H1 (cell line): ENCODE measurements at regions of chr2 and their contacts with region 1.

Region 1: GRCh38 chr2:84925724-84926376 is 20.4 kb downstream of the TMSB10 start:
- DNase-seq: peak; percentile 96 to 100
- H3K4me3 ChIP-seq: peak overlapping the region in 3 of 4 experiments; percentile 28 to 53 (median 45); a peak in 6 of 8 replicates
- H3K27ac ChIP-seq: no peak overlapping the region
- H3K4me1 ChIP-seq: peaks cover 0 to 10% (median 2%) of the 10 kb centered on the region in 4 experiments; a peak in 2 of 7 replicates
- H3K27me3 ChIP-seq: peaks cover 0 to 9% (median 3%) of the 10 kb centered on the region in 4 experiments; a peak in 2 of 7 replicates
- CTCF ChIP-seq: peak; percentile 96 to 99 (median 97)
- EP300 ChIP-seq: peak in 1 of 2 experiments; percentile 37; a peak in 1 of 3 replicates
- POLR2A ChIP-seq: no peak
- RAD21 ChIP-seq: peak; percentile 81 to 89

Region 2: GRCh38 chr2:84516234-84516986 is 409.4 kb before region 1 on chr2 and contains the start of gene DNAH6:
- CTCF ChIA-PET with region 1: no interaction called
- POLR2A ChIA-PET with region 1: no interaction called
- DNase-seq: peak; percentile 77 to 86
- H3K4me3 ChIP-seq: peak within 1 kb of the TSS; percentile 27 to 61 (median 38); a peak in 7 of 8 replicates
- H3K27ac ChIP-seq: no peak within 1 kb of the TSS
- H3K4me1 ChIP-seq: peaks cover 0 to 4% (median 3%) of the 10 kb centered on the region in 4 experiments; a peak in 2 of 7 replicates
- H3K27me3 ChIP-seq: no peaks in the 10 kb centered on the region; a peak in 1 of 7 replicates
- CTCF ChIP-seq: no peak
- EP300 ChIP-seq: peak in 1 of 2 experiments; percentile 43; a peak in 1 of 3 replicates
- POLR2A ChIP-seq: no peak
- RAD21 ChIP-seq: no peak
- total RNA-seq, gene DNAH6: 0.31 and 0.43 TPM in 2 replicates

Region 3: DNA sequence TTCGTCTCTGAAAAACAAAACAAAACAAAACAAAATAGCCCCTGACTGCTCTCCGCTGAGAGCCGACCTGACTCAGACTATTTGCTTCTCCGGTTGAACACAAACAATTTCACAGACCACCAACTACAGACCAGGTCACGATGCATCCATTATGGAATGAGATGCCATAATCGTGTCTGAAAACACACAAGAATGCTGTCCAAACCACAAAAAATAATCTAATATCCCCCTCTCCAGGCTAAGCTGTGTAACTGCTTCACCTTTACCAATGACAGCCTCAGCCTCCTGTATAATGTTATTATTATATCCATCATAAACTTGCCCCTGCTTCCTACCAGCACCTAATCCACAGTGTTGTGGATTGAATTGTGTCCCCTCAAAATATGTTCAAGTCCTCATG is 294.8 kb before region 1 on chr2:
- CTCF ChIA-PET with region 1: no interaction called
- POLR2A ChIA-PET with region 1: no interaction called
- DNase-seq: no peak
- H3K4me3 ChIP-seq: no peak overlapping the region
- H3K27ac ChIP-seq: no peak overlapping the region
- H3K4me1 ChIP-seq: no peaks in the 10 kb centered on the region
- H3K27me3 ChIP-seq: peaks cover 0 to 1% (median 0%) of the 10 kb centered on the region in 4 experiments; a peak in 2 of 7 replicates
- CTCF ChIP-seq: peak in 2 of 3 experiments; percentile 65 to 72; a peak in 3 of 4 replicates
- EP300 ChIP-seq: no peak
- POLR2A ChIP-seq: no peak
- RAD21 ChIP-seq: peak; percentile 91 to 93

Region 4: DNA sequence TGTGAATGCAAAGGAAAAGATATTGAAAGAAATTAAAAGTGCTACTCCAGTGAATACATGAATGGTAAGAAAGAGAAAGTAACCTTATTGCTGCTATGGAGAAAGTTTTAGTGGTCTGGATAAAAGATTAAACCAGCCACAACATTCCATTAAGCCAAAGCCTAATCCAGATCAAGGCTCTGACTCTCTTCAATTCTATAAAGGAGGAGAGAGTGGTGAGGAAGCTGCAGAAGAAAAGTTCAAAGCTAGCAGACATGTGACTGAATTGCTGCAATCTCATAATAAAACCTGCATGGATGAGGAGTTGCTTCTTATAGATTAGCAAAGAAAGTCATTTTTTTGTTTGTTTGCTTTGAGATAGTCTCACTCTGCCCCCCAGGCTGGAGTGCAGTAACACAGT is 279.3 kb before region 1 on chr2:
- CTCF ChIA-PET with region 1: no interaction called
- POLR2A ChIA-PET with region 1: no interaction called
- DNase-seq: no peak
- H3K4me3 ChIP-seq: no peak overlapping the region
- H3K27ac ChIP-seq: no peak overlapping the region
- H3K4me1 ChIP-seq: no peaks in the 10 kb centered on the region
- H3K27me3 ChIP-seq: peaks cover 0 to 2% (median 0%) of the 10 kb centered on the region in 4 experiments; a peak in 1 of 7 replicates
- CTCF ChIP-seq: no peak
- EP300 ChIP-seq: no peak
- POLR2A ChIP-seq: no peak
- RAD21 ChIP-seq: no peak

Region 5: DNA sequence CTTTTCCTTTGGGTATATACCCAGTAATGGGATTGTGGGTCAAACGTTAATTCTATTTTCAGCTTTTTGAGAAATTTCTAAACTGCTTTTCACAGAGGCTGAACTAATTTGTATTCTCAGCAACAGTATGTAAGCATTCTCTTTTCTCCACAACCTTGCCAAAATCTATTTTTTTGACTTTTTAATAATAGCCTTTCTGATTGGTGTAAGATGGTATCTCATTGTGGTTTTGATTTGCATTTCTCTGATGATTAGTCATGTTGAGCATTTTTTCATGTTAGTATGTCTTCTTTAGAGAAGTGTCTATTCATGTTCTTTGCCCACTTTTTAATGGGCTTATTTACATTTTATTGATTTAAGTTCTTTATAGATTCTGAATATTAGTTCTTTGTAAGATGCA is 190.5 kb before region 1 on chr2:
- CTCF ChIA-PET with region 1: no interaction called
- POLR2A ChIA-PET with region 1: no interaction called
- DNase-seq: no peak
- H3K4me3 ChIP-seq: no peak overlapping the region
- H3K27ac ChIP-seq: no peak overlapping the region
- H3K4me1 ChIP-seq: no peaks in the 10 kb centered on the region
- H3K27me3 ChIP-seq: no peaks in the 10 kb centered on the region
- CTCF ChIP-seq: no peak
- EP300 ChIP-seq: no peak
- POLR2A ChIP-seq: no peak
- RAD21 ChIP-seq: no peak

Region 6: GRCh38 chr2:84856787-84857186 is 69.1 kb before region 1 on chr2:
- CTCF ChIA-PET with region 1: interaction called, 17 read pairs
- POLR2A ChIA-PET with region 1: no interaction called
- DNase-seq: no peak
- H3K4me3 ChIP-seq: no peak overlapping the region
- H3K27ac ChIP-seq: no peak overlapping the region
- H3K4me1 ChIP-seq: peaks cover 7 to 17% (median 14%) of the 10 kb centered on the region in 4 experiments
- H3K27me3 ChIP-seq: peaks cover 16 to 36% (median 30%) of the 10 kb centered on the region in 4 experiments
- CTCF ChIP-seq: no peak
- EP300 ChIP-seq: no peak
- POLR2A ChIP-seq: no peak
- RAD21 ChIP-seq: no peak

Region 7: GRCh38 chr2:84905181-84906107 is 20.4 kb before region 1 on chr2 and contains the start of gene TMSB10:
- CTCF ChIA-PET with region 1: interaction called, 22 read pairs
- POLR2A ChIA-PET with region 1: interaction called, 16 read pairs
- DNase-seq: peak in 1 of 2 experiments; percentile 87
- H3K4me3 ChIP-seq: peak within 1 kb of the TSS; percentile 82 to 99 (median 90)
- H3K27ac ChIP-seq: peak within 1 kb of the TSS; percentile 62; the same call in 1 of the 2 replicates
- H3K4me1 ChIP-seq: peaks cover 0 to 14% (median 7%) of the 10 kb centered on the region in 4 experiments
- H3K27me3 ChIP-seq: peaks cover 0 to 10% (median 8%) of the 10 kb centered on the region in 4 experiments; a peak in 6 of 7 replicates
- CTCF ChIP-seq: no peak
- EP300 ChIP-seq: no peak
- POLR2A ChIP-seq: peak in 1 of 2 experiments; percentile 70; a peak in 2 of 3 replicates
- RAD21 ChIP-seq: no peak
- total RNA-seq, gene TMSB10: 1,075 and 1,095 TPM in 2 replicates

Region 8: DNA sequence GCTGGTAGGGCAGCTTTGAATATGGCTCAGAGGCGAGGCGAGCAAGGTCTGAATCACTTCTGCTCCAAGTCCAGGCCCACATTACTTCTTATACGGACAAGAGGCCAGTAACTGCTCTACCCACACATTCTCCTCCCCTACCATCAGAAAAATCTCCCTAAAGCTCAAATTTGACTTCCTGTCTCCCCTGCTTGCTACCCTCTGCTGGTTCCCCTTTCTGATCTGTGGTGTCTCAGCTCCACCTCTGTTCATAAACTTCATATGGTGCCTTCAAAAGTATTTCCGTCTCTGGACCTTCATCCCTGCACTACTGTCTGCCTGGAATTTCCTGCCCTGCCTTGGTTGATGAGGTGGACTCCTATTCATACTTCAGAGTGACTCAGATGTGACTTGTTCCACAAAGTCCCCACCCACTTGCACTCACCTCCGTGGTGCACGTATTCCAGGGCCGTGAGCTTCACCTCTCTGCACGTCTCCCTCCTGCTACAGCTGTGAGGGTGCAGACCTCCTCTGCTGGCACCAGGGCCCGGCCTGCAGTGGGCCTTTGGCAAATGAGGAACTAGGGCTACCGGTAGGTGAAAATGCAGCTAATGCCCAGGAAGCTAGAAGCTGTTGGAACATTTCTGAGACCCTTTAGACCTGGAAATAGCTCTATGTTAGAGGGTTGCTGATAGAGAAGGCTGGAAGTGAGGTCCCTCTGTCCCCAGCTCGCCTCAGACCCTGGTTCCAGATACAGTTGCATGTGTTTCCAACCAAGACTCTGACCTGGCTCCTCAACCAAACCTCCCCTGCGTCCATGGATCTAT is 20.6 kb after region 1 on chr2:
- CTCF ChIA-PET with region 1: interaction called, 57 read pairs
- POLR2A ChIA-PET with region 1: interaction called, 5 read pairs
- DNase-seq: no peak
- H3K4me3 ChIP-seq: no peak overlapping the region
- H3K27ac ChIP-seq: no peak overlapping the region
- H3K4me1 ChIP-seq: peaks cover 6 to 8% (median 6%) of the 10 kb centered on the region in 4 experiments; a peak in 6 of 7 replicates
- H3K27me3 ChIP-seq: no peaks in the 10 kb centered on the region
- CTCF ChIP-seq: no peak
- EP300 ChIP-seq: no peak
- POLR2A ChIP-seq: no peak
- RAD21 ChIP-seq: no peak

Region 9: DNA sequence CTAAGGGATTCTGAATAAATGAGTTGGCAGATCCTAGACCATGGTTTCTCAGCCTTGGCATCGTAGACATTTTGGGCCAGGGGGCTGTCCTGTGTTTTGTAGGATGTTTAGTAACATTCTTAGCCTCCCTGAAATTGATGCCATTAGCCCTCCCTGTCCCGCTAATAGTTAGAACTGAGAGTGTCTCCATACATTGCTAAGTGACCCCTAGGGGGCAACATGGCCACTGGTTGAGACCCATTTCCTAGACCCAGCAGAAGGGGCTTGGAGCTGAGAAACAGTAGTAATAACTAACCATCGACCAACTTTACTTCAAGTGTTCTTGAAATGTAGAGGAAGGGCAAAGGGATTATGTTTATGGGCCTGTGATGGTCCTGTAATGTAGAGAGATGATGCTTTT is 85.9 kb after region 1 on chr2:
- CTCF ChIA-PET with region 1: interaction called, 33 read pairs
- POLR2A ChIA-PET with region 1: interaction called, 3 read pairs
- DNase-seq: peak in 1 of 2 experiments; percentile 59
- H3K4me3 ChIP-seq: no peak overlapping the region
- H3K27ac ChIP-seq: no peak overlapping the region
- H3K4me1 ChIP-seq: peaks cover 0 to 11% (median 5%) of the 10 kb centered on the region in 4 experiments; a peak in 4 of 7 replicates
- H3K27me3 ChIP-seq: no peaks in the 10 kb centered on the region
- CTCF ChIP-seq: peak; percentile 38 to 71 (median 53)
- EP300 ChIP-seq: no peak
- POLR2A ChIP-seq: no peak
- RAD21 ChIP-seq: peak; percentile 23 to 41; a peak in 1 of 4 replicates